A673 (cell line): ENCODE measurements at regions of chr2 and their contacts with region 1.

Region 1: GRCh38 chr2:43611987-43612894 is 16.4 kb upstream of the THADA start:
- DNase-seq: peak; percentile 84
- H3K4me3 ChIP-seq: no peak overlapping the region
- H3K27ac ChIP-seq: no peak overlapping the region
- H3K4me1 ChIP-seq: no peaks in the 10 kb centered on the region
- H3K27me3 ChIP-seq: no peaks in the 10 kb centered on the region
- CTCF ChIP-seq: peak; percentile 86

Region 2: DNA sequence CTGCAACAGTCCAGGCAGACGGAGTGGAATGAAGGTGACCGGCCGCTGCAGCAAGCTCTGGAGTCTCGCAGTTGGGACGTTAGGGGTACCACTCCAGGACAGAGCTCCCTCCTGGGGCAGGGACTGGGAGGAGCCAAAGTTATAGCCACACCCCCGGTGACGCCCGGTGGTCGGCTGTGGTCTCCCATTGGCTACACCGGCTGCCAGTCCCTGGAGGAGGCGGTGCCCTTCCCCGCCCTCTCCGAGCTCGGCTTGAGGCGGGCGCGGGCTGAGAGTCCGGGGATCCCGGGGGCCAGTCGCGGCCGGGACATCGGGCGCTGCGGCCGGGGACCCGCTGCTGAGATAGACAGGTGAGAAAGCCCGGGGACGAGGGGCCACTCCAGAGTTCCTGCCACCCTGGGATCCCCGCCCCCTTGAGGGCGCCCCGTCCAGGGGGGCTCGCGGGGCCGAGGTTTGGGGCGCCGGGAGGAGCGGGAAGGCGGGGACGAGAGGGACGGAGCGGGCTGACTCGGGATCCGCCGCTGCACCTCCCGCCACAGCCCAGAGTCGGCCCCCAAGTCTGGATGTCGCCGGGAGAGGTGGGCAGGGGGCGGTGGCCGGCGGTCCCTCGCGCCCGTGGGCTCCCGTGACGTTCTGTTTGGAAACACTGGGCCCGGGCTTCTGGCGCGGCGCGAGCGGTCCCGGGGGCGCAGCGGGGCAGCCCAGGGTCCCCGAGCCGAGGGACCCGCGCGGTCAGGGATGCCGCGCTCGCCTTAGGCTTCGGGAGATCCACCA is 25.0 kb after region 1 on chr2 and contains the start of gene PLEKHH2:
- CTCF ChIA-PET with region 1: no interaction called
- POLR2A ChIA-PET with region 1: no interaction called
- intact Hi-C with region 1: no loop called
- DNase-seq: peak; percentile 90
- H3K4me3 ChIP-seq: peak within 1 kb of the TSS; percentile 81
- H3K27ac ChIP-seq: no peak within 1 kb of the TSS
- H3K4me1 ChIP-seq: peaks cover 17% of the 10 kb centered on the region
- H3K27me3 ChIP-seq: no peaks in the 10 kb centered on the region
- CTCF ChIP-seq: no peak
- total RNA-seq, gene PLEKHH2: 2.2 and 4.7 TPM in 2 replicates

Region 3: GRCh38 chr2:43877782-43878464 is 265.7 kb after region 1 on chr2:
- CTCF ChIA-PET with region 1: no interaction called
- POLR2A ChIA-PET with region 1: no interaction called
- intact Hi-C with region 1: loop called (anchors 2 kb)
- DNase-seq: peak; percentile 74
- H3K4me3 ChIP-seq: no peak overlapping the region
- H3K27ac ChIP-seq: no peak overlapping the region
- H3K4me1 ChIP-seq: peaks cover 4% of the 10 kb centered on the region
- H3K27me3 ChIP-seq: no peaks in the 10 kb centered on the region
- CTCF ChIP-seq: peak; percentile 98